GM18951 (cell line): ENCODE measurements at regions of chr12 and their contacts with region 1.

Region 1: GRCh38 chr12:103884316-103884715 is 43.3 kb upstream of the NT5DC3 start:
- POLR2A ChIP-seq: no peak

Region 2: GRCh38 chr12:103840876-103841689 is 43.2 kb before region 1 on chr12 and contains the start of gene NT5DC3:
- in situ Hi-C with region 1: no loop called
- POLR2A ChIP-seq: peak; percentile 94

Region 3: DNA sequence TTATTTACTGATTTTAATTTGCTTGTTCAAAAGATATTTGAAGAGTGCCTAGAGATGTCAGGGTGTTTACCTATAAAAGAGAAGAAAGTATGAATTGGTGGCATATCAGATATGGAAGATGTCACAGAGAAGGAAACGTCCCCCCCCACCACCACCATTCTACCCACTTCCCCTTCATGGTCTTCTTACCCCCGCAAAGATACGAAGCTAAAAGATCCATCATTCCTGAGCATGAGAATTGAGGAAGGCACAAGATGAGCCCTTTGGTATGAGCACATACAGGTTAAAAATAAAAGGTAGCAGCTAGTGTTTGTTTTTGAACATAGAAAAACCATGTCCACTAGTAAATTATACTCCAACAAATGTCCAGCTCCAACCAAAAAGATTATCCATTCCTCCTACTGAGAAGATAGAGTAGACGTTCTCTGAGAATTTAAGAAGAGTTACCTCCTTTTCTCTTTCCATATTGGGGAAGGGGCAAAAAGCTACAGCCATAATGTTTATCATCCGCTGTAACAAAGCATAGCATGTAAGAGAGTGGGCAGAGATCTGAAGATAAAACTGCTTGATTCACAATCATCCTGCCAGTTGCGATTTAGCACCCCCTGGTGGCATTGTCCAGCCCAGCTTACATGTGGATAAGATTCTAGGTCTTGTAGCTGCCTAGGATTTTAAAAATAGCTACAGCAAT is 224.6 kb after region 1 on chr12:
- in situ Hi-C with region 1: loop called (anchors 10 kb)
- POLR2A ChIP-seq: no peak

Region 4: GRCh38 chr12:104371043-104371870 is 486.9 kb after region 1 on chr12:
- in situ Hi-C with region 1: no loop called
- POLR2A ChIP-seq: no peak